ENCODE measurements at regions of chr10 and their contacts with region 1.

Region 1: DNA sequence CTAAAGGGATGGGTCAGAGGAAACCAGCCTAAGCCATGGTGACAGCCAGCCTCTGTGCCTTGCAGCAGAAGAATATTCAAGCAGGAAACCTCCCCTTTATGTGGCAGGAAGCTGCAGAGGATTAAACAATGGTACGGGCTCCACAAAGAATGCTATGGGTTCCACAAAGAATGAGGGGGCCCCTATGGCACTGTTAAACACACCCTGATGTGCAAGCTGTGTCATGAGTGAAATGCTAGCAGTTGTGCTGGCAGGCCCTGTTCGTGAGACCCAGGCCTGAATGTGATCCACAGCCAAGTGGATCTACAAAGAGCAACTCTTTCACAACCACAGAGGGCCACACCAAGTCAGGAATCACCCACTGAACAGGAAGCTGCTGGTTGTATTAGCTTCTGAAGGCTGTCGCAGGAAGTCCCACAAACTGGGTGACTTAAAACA is 68.9 kb downstream of the MYOF start:
- DNase-seq: no peak
- H3K4me3 ChIP-seq: no peak overlapping the region
- H3K27ac ChIP-seq: no peak overlapping the region
- H3K4me1 ChIP-seq: peaks cover 14 to 15% of the 10 kb centered on the region in 2 donors
- H3K27me3 ChIP-seq: no peaks in the 10 kb centered on the region
- CTCF ChIP-seq: no peak
- POLR2A ChIP-seq: no peak

Region 2: GRCh38 chr10:92432596-92432995 is 980.7 kb before region 1 on chr10:
- intact Hi-C with region 1: no loop called
- DNase-seq: no peak
- H3K4me3 ChIP-seq: no peak overlapping the region
- H3K27ac ChIP-seq: no peak overlapping the region
- H3K4me1 ChIP-seq: no peaks in the 10 kb centered on the region
- H3K27me3 ChIP-seq: no peaks in the 10 kb centered on the region
- CTCF ChIP-seq: no peak
- POLR2A ChIP-seq: no peak

Region 3: GRCh38 chr10:93138113-93138870 is 275.0 kb before region 1 on chr10:
- intact Hi-C with region 1: no loop called
- DNase-seq: no peak
- H3K4me3 ChIP-seq: no peak overlapping the region
- H3K27ac ChIP-seq: no peak overlapping the region
- H3K4me1 ChIP-seq: no peaks in the 10 kb centered on the region
- H3K27me3 ChIP-seq: no peaks in the 10 kb centered on the region
- CTCF ChIP-seq: no peak
- POLR2A ChIP-seq: no peak

Region 4: GRCh38 chr10:93224005-93224779 is 189.1 kb before region 1 on chr10:
- intact Hi-C with region 1: no loop called
- DNase-seq: peak in 1 of 2 donors; percentile 8
- H3K4me3 ChIP-seq: no peak overlapping the region
- H3K27ac ChIP-seq: no peak overlapping the region
- H3K4me1 ChIP-seq: no peaks in the 10 kb centered on the region
- H3K27me3 ChIP-seq: no peaks in the 10 kb centered on the region
- CTCF ChIP-seq: no peak
- POLR2A ChIP-seq: no peak

Region 5: GRCh38 chr10:93471110-93471651 is 57.9 kb after region 1 on chr10:
- intact Hi-C with region 1: loop called (anchors 10 kb)
- DNase-seq: no peak
- H3K4me3 ChIP-seq: no peak overlapping the region
- H3K27ac ChIP-seq: peak overlapping the region; percentile 61 to 76 (median 71)
- H3K4me1 ChIP-seq: peaks cover 33 to 57% of the 10 kb centered on the region in 2 donors
- H3K27me3 ChIP-seq: no peaks in the 10 kb centered on the region
- CTCF ChIP-seq: no peak
- POLR2A ChIP-seq: no peak